Left lung (tissue), 14 donors: ENCODE measurements at regions of chr1 and their contacts with region 1.

Region 1: GRCh38 chr1:116679091-116679827 is 11.7 kb upstream of the IGSF3 start:
- DNase-seq: no peak
- ATAC-seq: no peak
- H3K4me3 ChIP-seq: no peak overlapping the region
- H3K27ac ChIP-seq: no peak overlapping the region
- H3K4me1 ChIP-seq: no peaks in the 10 kb centered on the region
- H3K27me3 ChIP-seq: no peaks in the 10 kb centered on the region
- CTCF ChIP-seq: no peak

Region 2: DNA sequence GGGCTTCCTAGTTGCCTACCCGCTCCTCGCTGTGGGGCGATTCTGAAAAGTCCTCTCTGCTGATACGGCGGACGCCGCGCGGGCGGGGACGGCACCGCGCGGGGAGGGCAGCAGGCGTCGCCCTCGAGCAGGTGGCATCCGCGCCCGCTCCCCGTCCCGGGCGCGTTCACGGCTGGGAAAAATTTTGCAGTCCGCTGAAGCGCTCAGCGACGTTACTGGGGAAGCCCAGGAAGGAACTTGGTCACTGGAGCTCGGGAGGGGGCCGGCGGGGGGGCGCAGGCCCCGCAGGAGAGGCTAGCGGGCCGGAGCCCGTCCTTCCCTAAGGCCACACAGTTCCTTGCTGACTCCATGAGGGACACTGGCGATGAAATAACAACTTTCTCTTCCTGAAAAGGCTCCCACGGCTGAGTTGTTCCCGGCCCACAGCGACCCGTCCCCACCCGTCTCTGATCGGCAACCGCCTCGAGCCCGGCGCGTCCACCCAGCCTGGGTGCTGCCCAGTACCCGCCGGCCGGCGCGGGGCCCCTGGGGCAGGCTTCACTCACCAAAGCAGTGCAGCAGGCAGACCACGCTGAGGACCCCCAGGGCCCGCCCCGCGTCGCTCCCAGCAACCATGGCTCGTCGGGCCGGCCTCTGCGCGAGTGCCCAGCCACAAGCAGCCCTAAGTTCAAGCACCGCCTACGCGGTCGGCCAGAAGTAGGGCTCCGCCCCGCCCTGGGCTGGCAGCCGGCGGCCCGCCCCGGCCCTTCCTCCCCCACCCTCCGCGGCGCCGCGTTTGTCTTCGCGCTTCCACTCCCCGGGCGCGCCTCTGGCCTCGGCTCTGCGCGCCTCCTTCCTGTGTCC is 108.7 kb before region 1 on chr1 and contains the start of gene CD58:
- intact Hi-C with region 1: loop called in 1 of 2 experiments (anchors 10 kb)
- DNase-seq: peak; percentile 67 to 99 (median 92)
- ATAC-seq: peak; percentile 94
- H3K4me3 ChIP-seq: peak within 1 kb of the TSS; percentile 86
- H3K27ac ChIP-seq: peak within 1 kb of the TSS; percentile 97 to 100
- H3K4me1 ChIP-seq: peaks cover 0 to 69% of the 10 kb centered on the region in 2 donors
- H3K27me3 ChIP-seq: no peaks in the 10 kb centered on the region
- CTCF ChIP-seq: peak; percentile 48 to 81
- polyA plus RNA-seq, gene CD58: 10.1 to 14.0 (median 13.2) TPM

Region 3: GRCh38 chr1:116586741-116587143 is 92.5 kb before region 1 on chr1:
- intact Hi-C with region 1: no loop called
- DNase-seq: no peak
- ATAC-seq: no peak
- H3K4me3 ChIP-seq: no peak overlapping the region
- H3K27ac ChIP-seq: no peak overlapping the region
- H3K4me1 ChIP-seq: peaks cover 0 to 7% of the 10 kb centered on the region in 2 donors
- H3K27me3 ChIP-seq: no peaks in the 10 kb centered on the region
- CTCF ChIP-seq: no peak